CD4-positive, alpha-beta memory T cell (primary cell): ENCODE measurements at regions of chr1 and their contacts with region 1.

Region 1: GRCh38 chr1:150259758-150260669 is 2.4 kb downstream of the CA14 start:
- DNase-seq: no peak
- H3K4me3 ChIP-seq: no peak overlapping the region
- H3K4me3 Mint-ChIP-seq: no peak overlapping the region
- H3K27ac ChIP-seq: no peak overlapping the region
- H3K27ac Mint-ChIP-seq: peak overlapping the region in 1 of 7 donors; percentile 36
- H3K4me1 ChIP-seq: peaks cover 15% of the 10 kb centered on the region
- H3K4me1 Mint-ChIP-seq: peaks cover 8 to 25% (median 13%) of the 10 kb centered on the region in 4 donors
- H3K27me3 ChIP-seq: peaks cover 27% of the 10 kb centered on the region
- H3K27me3 Mint-ChIP-seq: peaks cover 19 to 24% of the 10 kb centered on the region in 2 donors

Region 2: DNA sequence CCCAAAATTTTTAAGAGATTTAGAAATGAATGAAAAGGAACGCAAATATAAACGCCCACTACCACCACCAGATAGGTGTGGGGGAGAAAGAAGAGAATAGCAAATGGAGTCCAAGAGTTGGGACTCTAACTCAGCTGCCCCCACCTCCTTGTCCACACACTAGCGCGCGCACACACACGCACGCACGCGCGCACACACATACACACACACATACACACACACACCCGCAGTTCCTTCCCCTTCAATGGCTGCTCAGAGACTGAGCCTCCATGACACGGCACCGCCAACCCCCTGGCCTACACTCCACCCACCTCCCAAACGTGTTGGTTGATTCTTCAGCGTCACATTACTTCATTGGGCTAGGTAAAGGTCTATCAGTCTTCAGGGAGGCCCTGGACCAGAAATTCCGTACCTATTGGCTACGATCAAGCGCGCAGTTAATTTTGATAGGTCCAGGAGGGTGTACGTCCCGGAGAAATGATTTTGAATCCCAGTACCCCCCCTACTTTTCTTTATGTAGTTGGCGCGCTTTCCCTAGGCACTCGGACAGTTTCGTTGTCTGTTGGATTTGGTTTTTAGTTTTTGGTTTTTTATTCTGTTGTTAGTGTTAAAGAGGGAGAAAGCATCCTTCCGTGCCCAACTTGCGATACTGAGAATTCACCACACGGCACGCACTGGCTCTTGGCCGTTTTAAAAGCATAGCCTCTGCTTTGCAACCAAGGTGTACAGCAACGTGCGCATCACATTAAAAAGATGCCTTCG is 24.0 kb before region 1 on chr1 and contains the start of gene ANP32E:
- CTCF ChIA-PET with region 1: interaction called, 13 read pairs
- POLR2A ChIA-PET with region 1: no interaction called
- intact Hi-C with region 1: loop called (anchors 1 kb)
- DNase-seq: peak; percentile 96 to 99 (median 98)
- H3K4me3 ChIP-seq: peak within 1 kb of the TSS; percentile 76 to 100
- H3K4me3 Mint-ChIP-seq: peak within 1 kb of the TSS in 6 of 8 donors; percentile 26 to 96 (median 94)
- H3K27ac ChIP-seq: peak within 1 kb of the TSS; percentile 99
- H3K27ac Mint-ChIP-seq: peak within 1 kb of the TSS in 6 of 7 donors; percentile 96 to 100 (median 99)
- H3K4me1 ChIP-seq: peaks cover 22% of the 10 kb centered on the region
- H3K4me1 Mint-ChIP-seq: peaks cover 12 to 19% (median 16%) of the 10 kb centered on the region in 4 donors
- H3K27me3 ChIP-seq: no peaks in the 10 kb centered on the region
- H3K27me3 Mint-ChIP-seq: no peaks in the 10 kb centered on the region
- total RNA-seq, gene ANP32E: 53.4 to 57.9 TPM

Region 3: DNA sequence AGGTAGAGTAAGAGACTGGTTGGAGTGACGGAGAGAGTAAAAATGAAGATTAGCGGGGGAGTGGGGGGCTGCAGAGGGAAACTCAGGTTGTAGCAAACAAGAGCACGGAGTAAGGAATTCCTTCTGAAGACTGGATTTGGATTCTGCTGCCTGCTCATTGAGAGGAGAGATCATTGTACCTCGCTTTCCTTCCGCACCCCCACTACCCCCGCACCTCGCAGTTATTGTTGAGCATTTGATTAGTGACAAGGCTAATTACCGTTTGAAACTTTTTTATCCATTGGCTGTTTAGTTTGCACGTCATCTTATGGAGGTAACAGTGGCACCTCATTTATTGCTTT is 61.8 kb after region 1 on chr1:
- CTCF ChIA-PET with region 1: interaction called, 4 read pairs
- POLR2A ChIA-PET with region 1: interaction called, 4 read pairs
- intact Hi-C with region 1: loop called (anchors 2 kb)
- DNase-seq: peak in 4 of 5 donors; percentile 19 to 53 (median 24)
- H3K4me3 ChIP-seq: peak overlapping the region; percentile 68 to 91
- H3K4me3 Mint-ChIP-seq: peak overlapping the region; percentile 95 to 100 (median 99)
- H3K27ac ChIP-seq: peak overlapping the region; percentile 81
- H3K27ac Mint-ChIP-seq: peak overlapping the region; percentile 95 to 100 (median 97)
- H3K4me1 ChIP-seq: peaks cover 23% of the 10 kb centered on the region
- H3K4me1 Mint-ChIP-seq: peaks cover 15 to 45% (median 30%) of the 10 kb centered on the region in 4 donors
- H3K27me3 ChIP-seq: no peaks in the 10 kb centered on the region
- H3K27me3 Mint-ChIP-seq: no peaks in the 10 kb centered on the region

Region 4: DNA sequence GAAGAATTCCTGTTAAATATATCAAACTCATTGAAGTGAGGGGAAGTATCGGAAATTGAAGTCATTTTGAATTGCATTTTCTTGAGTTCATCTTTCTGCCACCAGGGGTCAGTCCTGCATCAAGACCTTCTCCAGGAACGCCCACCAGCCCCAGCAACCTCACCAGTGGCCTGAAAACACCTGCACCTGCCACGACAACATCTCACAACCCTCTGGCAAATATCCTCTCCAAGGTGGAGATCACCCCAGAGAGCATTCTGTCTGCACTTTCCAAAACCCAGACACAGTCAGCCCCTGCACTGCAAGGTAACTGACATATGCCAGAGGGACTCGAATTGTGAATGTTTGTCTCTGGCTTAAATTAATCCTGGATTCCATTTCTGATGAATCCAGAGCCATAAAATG is 204.4 kb after region 1 on chr1:
- CTCF ChIA-PET with region 1: interaction called, 12 read pairs
- POLR2A ChIA-PET with region 1: no interaction called
- intact Hi-C with region 1: no loop called
- DNase-seq: peak; percentile 66 to 77 (median 70)
- H3K4me3 ChIP-seq: no peak overlapping the region
- H3K4me3 Mint-ChIP-seq: no peak overlapping the region
- H3K27ac ChIP-seq: no peak overlapping the region
- H3K27ac Mint-ChIP-seq: peak overlapping the region in 3 of 7 donors; percentile 0 to 88 (median 38)
- H3K4me1 ChIP-seq: no peaks in the 10 kb centered on the region
- H3K4me1 Mint-ChIP-seq: peaks cover 0 to 6% (median 4%) of the 10 kb centered on the region in 4 donors
- H3K27me3 ChIP-seq: no peaks in the 10 kb centered on the region
- H3K27me3 Mint-ChIP-seq: no peaks in the 10 kb centered on the region

Region 5: DNA sequence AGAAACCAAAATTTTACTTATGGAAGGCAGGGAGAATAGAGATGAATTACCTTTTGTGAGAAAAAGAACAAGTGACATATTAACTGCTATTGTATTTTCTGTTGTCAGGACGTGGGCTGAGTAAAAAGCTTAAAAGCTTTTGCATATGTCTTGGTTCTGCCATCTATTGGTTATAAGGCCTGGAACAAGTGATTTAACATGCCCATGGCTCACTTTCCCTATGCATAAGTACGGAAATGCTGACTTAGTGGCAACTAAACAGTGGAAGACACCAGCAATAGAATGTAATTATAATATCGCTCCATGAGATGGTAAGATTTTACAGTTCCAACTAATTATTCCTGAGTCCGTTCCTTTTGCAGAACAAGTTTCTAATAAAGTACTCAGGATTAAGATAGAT is 512.3 kb after region 1 on chr1:
- CTCF ChIA-PET with region 1: no interaction called
- POLR2A ChIA-PET with region 1: no interaction called
- intact Hi-C with region 1: no loop called
- DNase-seq: no peak
- H3K4me3 ChIP-seq: no peak overlapping the region
- H3K4me3 Mint-ChIP-seq: no peak overlapping the region
- H3K27ac ChIP-seq: no peak overlapping the region
- H3K27ac Mint-ChIP-seq: no peak overlapping the region
- H3K4me1 ChIP-seq: peaks cover 6% of the 10 kb centered on the region
- H3K4me1 Mint-ChIP-seq: peaks cover 13 to 24% (median 19%) of the 10 kb centered on the region in 4 donors
- H3K27me3 ChIP-seq: no peaks in the 10 kb centered on the region
- H3K27me3 Mint-ChIP-seq: no peaks in the 10 kb centered on the region

Region 6: DNA sequence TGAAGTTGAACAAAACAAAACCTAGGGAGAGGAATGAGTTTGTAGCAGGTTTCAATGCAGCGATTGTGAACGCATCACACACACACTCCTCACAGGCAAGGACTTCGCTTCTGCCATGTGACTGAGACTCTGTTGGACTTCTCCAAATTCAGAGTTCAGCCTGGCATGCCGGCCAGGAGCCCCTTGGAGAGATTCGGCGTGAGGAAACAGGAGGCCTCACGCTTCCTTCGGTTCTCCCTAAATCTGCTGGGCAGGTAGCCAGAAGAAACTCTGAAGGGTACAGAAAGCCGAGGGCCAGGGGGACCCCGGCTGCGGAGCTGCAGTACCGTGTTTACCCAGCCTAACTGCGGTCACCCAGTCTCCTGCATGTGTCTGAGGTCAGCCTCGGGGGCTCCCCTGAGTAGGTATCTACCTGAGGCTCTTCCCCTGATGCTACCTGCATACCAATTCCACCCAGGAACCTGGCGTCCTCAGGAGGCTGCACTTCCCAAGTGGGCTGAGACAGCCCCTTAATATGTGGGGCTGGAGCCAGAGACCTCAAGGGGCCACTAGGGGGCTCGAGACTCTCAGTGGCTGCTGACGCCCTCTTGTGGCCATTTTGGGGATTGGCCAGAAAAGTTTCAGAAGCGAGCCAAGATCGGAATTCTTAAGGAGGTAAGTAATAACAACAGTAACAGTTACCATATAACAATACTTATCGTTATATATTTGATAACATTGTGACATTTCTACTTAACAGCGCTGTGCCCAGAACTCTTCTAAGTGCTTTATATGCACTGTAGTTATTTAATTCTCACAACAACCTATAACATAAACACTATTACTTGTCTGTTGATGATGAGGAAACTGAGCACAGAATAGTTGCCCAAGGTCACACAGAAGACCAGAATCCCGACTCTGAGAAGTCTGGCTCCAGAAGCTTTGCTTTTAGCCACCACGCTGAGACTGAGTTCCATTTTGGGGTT is 719.4 kb after region 1 on chr1:
- CTCF ChIA-PET with region 1: no interaction called
- POLR2A ChIA-PET with region 1: no interaction called
- intact Hi-C with region 1: loop called (anchors 1 kb)
- DNase-seq: peak; percentile 83 to 87 (median 85)
- H3K4me3 ChIP-seq: peak overlapping the region in 1 of 2 donors; percentile 52
- H3K4me3 Mint-ChIP-seq: peak overlapping the region in 4 of 8 donors; percentile 29 to 59 (median 41)
- H3K27ac ChIP-seq: peak overlapping the region; percentile 11
- H3K27ac Mint-ChIP-seq: peak overlapping the region in 6 of 7 donors; percentile 48 to 83 (median 64)
- H3K4me1 ChIP-seq: peaks cover 39% of the 10 kb centered on the region
- H3K4me1 Mint-ChIP-seq: peaks cover 20 to 44% (median 31%) of the 10 kb centered on the region in 4 donors
- H3K27me3 ChIP-seq: no peaks in the 10 kb centered on the region
- H3K27me3 Mint-ChIP-seq: no peaks in the 10 kb centered on the region